ENCODE measurements at regions of chrX and their contacts with region 1.

Region 1: DNA sequence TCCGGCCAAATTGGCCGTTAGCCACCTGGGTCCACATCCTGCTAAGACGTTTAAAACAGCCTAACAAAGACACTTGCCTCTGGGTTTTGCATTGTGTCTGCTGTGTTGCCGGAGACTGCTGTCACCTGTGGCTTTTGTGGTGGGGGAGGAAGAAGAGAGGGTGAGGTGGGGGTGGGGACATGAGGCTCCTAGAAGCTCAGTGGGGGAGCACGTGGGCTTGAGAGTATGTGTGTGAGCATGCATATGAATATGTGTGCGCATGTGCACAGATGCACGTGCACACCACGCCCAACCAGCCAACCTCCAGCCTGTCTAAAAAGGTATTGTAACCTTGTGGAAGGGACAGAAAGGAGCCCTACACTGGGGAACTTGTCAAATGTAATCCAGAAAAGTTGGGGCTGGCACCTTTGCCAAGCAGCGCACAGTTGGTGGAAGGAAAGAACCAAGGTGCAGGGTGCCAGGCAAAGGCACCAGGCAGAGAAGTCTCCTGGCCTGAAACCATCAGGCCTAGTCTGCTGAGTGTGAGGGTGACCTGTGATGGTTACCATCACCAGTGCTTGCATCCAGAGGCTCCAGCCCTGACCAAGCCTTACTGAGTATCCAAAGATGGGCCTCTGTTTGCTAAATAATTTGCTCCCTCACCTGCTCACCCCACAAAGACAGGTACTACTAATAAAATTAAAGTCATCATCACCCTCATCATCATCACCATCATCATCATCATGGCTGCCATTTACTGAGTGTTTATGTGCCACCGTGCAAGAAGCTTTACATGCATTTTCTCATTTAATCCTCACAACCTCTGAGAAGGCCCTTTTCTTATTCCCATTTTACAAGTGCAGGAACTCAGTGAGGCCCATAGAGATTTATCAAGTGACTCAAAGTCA is 10.0 kb upstream of the SASH3 start:
- DNase-seq: peak in 1 of 2 donors; percentile 94
- ATAC-seq: peak; percentile 36 to 72 (median 66)
- H3K4me3 ChIP-seq: no peak overlapping the region
- H3K4me3 Mint-ChIP-seq: peak overlapping the region; percentile 65
- H3K27ac ChIP-seq: peak overlapping the region; percentile 77
- H3K27ac Mint-ChIP-seq: peak overlapping the region; percentile 75 to 83
- H3K4me1 ChIP-seq: peaks cover 81% of the 10 kb centered on the region
- H3K4me1 Mint-ChIP-seq: peaks cover 48 to 57% of the 10 kb centered on the region in 2 donors
- H3K27me3 ChIP-seq: no peaks in the 10 kb centered on the region
- H3K27me3 Mint-ChIP-seq: no peaks in the 10 kb centered on the region
- CTCF ChIP-seq: no peak

Region 2: GRCh38 chrX:129759576-129760061 is 10.1 kb before region 1 on chrX:
- intact Hi-C with region 1: loop called (anchors 1 kb)
- DNase-seq: peak; percentile 47 to 81
- ATAC-seq: peak; percentile 71 to 84 (median 76)
- H3K4me3 ChIP-seq: no peak overlapping the region
- H3K4me3 Mint-ChIP-seq: peak overlapping the region; percentile 53
- H3K27ac ChIP-seq: peak overlapping the region; percentile 68
- H3K27ac Mint-ChIP-seq: peak overlapping the region; percentile 85 to 87
- H3K4me1 ChIP-seq: peaks cover 68% of the 10 kb centered on the region
- H3K4me1 Mint-ChIP-seq: peaks cover 55 to 64% of the 10 kb centered on the region in 2 donors
- H3K27me3 ChIP-seq: no peaks in the 10 kb centered on the region
- H3K27me3 Mint-ChIP-seq: no peaks in the 10 kb centered on the region
- CTCF ChIP-seq: no peak

Region 3: DNA sequence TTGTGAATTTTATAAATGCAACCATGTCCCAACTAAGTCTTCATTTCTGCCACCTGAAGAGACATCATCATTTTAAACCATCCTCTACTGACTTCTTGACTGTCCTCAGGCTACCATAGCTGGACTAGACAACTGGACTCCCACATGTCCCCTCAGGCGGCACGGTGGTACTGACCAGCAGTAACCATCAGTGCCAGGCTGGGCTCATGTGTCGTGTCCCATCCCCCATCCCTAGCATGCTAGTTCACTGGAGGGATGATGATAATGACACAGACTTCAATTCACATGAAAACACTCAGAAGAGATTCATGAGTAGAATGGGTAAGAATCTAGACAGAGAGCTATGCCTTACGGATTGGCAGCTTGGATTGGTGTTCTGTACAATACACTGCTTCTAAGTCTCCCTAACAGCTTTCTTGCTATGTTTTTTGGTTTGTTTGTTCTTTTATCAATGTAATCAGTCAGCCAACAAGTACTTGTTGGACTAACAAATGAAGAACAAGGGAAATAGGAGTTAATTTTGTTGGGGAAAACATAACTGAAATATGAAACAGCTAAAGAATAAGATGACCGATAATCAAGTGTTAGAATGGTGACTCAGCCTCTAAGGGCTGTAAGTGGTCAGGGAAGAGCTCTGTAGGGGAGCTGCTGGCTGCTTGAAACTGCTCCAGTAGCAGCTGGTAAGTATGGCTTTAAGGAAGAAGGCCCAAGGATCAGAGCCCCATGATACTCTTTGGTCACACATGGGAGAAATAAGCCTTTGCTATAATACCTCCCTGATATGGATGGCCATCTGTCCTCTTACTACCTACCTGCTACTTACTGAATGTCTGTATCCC is 63.7 kb after region 1 on chrX:
- intact Hi-C with region 1: no loop called
- DNase-seq: no peak
- ATAC-seq: no peak
- H3K4me3 ChIP-seq: no peak overlapping the region
- H3K4me3 Mint-ChIP-seq: no peak overlapping the region
- H3K27ac ChIP-seq: no peak overlapping the region
- H3K27ac Mint-ChIP-seq: no peak overlapping the region
- H3K4me1 ChIP-seq: no peaks in the 10 kb centered on the region
- H3K4me1 Mint-ChIP-seq: no peaks in the 10 kb centered on the region
- H3K27me3 ChIP-seq: no peaks in the 10 kb centered on the region
- H3K27me3 Mint-ChIP-seq: peaks cover 0 to 23% of the 10 kb centered on the region in 2 donors
- CTCF ChIP-seq: no peak

Region 4: GRCh38 chrX:130071611-130072344 is 302.1 kb after region 1 on chrX:
- intact Hi-C with region 1: no loop called
- DNase-seq: no peak
- ATAC-seq: no peak
- H3K4me3 ChIP-seq: no peak overlapping the region
- H3K4me3 Mint-ChIP-seq: no peak overlapping the region
- H3K27ac ChIP-seq: no peak overlapping the region
- H3K27ac Mint-ChIP-seq: peak overlapping the region in 1 of 2 donors; percentile 29
- H3K4me1 ChIP-seq: no peaks in the 10 kb centered on the region
- H3K4me1 Mint-ChIP-seq: peaks cover 5 to 6% of the 10 kb centered on the region in 2 donors
- H3K27me3 ChIP-seq: no peaks in the 10 kb centered on the region
- H3K27me3 Mint-ChIP-seq: no peaks in the 10 kb centered on the region
- CTCF ChIP-seq: no peak

Measured in natural killer cell (primary cell).